ENCODE measurements at regions of chr12 and their contacts with region 1.

Region 1: DNA sequence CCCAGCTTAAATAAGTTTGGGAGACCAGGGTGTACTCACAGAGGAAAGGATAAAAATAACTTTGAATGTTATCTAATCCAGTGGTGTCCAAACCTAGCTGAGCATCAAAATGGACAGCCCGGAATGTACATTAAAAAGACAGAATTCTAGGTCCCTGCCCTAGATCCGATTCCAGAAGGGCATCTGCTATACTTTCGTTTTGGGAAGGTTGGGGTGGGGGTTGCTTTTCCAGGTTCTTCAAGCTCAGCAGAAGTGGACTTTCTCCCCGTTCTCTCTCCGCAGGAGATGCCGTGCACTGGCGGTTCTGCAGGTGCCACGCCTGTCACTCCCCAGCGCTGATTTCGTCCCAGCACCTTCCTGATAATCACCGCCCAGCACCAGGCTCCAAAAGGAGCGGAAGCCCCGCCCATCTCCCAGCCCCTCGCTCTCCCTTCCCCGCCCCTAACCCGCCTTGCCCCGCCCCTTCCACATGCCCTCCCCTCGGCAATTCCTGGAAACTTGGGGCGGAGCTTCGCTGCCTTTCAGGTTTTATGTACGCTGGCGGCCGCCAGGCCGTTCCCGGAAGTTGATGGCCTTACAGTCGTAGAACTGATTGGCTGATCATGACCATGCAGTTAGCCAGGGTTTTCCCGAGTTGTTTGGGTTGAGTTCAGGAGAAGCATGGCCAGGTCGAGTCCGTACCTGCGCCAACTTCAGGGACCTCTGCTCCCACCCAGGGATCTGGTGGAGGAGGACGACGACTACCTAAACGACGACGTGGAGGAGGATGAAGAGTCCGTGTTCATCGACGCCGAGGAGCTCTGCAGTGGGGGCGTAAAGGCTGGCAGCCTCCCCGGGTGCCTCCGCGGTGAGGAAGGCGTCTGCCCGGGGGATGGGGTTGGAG is at the start of gene HELB:
- DNase-seq: peak; percentile 73 to 93 (median 84)
- ATAC-seq: peak; percentile 92
- H3K4me3 ChIP-seq: peak within 1 kb of the TSS; percentile 98
- H3K4me3 Mint-ChIP-seq: peak within 1 kb of the TSS; percentile 87 to 99 (median 97)
- H3K27ac ChIP-seq: peak within 1 kb of the TSS; percentile 91
- H3K27ac Mint-ChIP-seq: peak within 1 kb of the TSS; percentile 90 to 99 (median 98)
- H3K4me1 ChIP-seq: peaks cover 17 to 20% of the 10 kb centered on the region in 2 donors
- H3K4me1 Mint-ChIP-seq: peaks cover 25 to 63% (median 54%) of the 10 kb centered on the region in 7 donors
- H3K27me3 ChIP-seq: no peaks in the 10 kb centered on the region
- H3K27me3 Mint-ChIP-seq: peaks cover 0 to 5% (median 0%) of the 10 kb centered on the region in 5 donors
- total RNA-seq, gene HELB: 47.9 to 59.2 (median 54.0) TPM

Region 2: GRCh38 chr12:64445490-64445889 is 1856.7 kb before region 1 on chr12:
- CTCF ChIA-PET with region 1: no interaction called
- POLR2A ChIA-PET with region 1: no interaction called
- intact Hi-C with region 1: no loop called
- DNase-seq: no peak
- ATAC-seq: no peak
- H3K4me3 ChIP-seq: no peak overlapping the region
- H3K4me3 Mint-ChIP-seq: no peak overlapping the region
- H3K27ac ChIP-seq: no peak overlapping the region
- H3K27ac Mint-ChIP-seq: peak overlapping the region in 6 of 9 donors; percentile 14 to 79 (median 54)
- H3K4me1 ChIP-seq: peaks cover under 1 to 12% of the 10 kb centered on the region in 2 donors
- H3K4me1 Mint-ChIP-seq: peaks cover 12 to 38% (median 31%) of the 10 kb centered on the region in 7 donors
- H3K27me3 ChIP-seq: no peaks in the 10 kb centered on the region
- H3K27me3 Mint-ChIP-seq: no peaks in the 10 kb centered on the region

Region 3: GRCh38 chr12:64669270-64669842 is 1632.8 kb before region 1 on chr12:
- CTCF ChIA-PET with region 1: no interaction called
- POLR2A ChIA-PET with region 1: no interaction called
- intact Hi-C with region 1: loop called (anchors 5 to 10 kb)
- DNase-seq: peak; percentile 26 to 87 (median 84)
- ATAC-seq: peak; percentile 93
- H3K4me3 ChIP-seq: peak overlapping the region; percentile 52
- H3K4me3 Mint-ChIP-seq: peak overlapping the region; percentile 85 to 98 (median 92)
- H3K27ac ChIP-seq: peak overlapping the region; percentile 72
- H3K27ac Mint-ChIP-seq: peak overlapping the region; percentile 91 to 99 (median 97)
- H3K4me1 ChIP-seq: peaks cover 89 to 90% of the 10 kb centered on the region in 2 donors
- H3K4me1 Mint-ChIP-seq: peaks cover 65 to 98% (median 90%) of the 10 kb centered on the region in 7 donors
- H3K27me3 ChIP-seq: no peaks in the 10 kb centered on the region
- H3K27me3 Mint-ChIP-seq: no peaks in the 10 kb centered on the region

Region 4: DNA sequence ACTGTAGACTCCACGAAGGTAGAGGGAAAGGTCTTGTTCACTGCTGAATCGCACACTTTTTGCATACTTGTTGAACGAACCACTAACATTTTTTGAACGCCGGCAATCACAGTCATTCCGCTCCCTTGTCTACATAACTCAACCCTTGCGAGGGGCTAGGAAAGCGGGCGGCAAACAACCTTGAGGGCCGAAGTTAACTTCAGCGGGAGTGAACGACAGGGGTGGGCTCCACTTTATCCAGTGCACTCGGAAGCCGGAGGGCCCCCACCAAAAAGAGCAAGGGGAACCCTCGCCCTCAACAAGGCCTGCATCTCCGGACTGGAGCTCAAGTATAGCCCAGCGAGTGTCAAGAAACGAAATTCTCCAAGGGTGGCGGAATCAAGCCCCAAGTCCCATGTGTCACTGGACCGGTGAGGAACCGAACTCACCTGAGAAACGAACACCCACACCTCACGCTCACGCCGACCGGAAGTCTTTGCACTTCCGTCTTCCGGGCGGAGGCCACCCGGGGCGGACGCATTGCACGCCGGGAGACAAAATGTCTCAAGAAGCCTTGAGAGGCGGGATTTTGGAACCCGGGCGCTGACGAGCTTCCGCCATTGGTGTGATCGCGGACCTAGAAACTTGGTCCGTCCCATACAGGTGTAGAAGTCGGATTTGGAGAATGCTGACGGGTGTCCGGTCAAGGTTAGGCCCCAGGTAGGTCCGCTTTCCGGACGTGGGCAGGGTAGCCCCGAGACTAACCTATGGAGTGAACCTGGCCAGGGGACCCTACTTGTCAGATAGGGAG is 171.7 kb before region 1 on chr12 and contains the start of gene LLPH:
- CTCF ChIA-PET with region 1: no interaction called
- POLR2A ChIA-PET with region 1: interaction called, 9 read pairs
- intact Hi-C with region 1: loop called (anchors 1 kb)
- DNase-seq: peak; percentile 72 to 88 (median 86)
- ATAC-seq: peak; percentile 97
- H3K4me3 ChIP-seq: peak within 1 kb of the TSS; percentile 99
- H3K4me3 Mint-ChIP-seq: peak within 1 kb of the TSS; percentile 92 to 98 (median 97)
- H3K27ac ChIP-seq: peak within 1 kb of the TSS; percentile 87
- H3K27ac Mint-ChIP-seq: peak within 1 kb of the TSS; percentile 95 to 99 (median 97)
- H3K4me1 ChIP-seq: peaks cover 19 to 23% of the 10 kb centered on the region in 2 donors
- H3K4me1 Mint-ChIP-seq: peaks cover 37 to 76% (median 63%) of the 10 kb centered on the region in 7 donors
- H3K27me3 ChIP-seq: no peaks in the 10 kb centered on the region
- H3K27me3 Mint-ChIP-seq: no peaks in the 10 kb centered on the region
- total RNA-seq, gene LLPH: 14.7 to 29.1 (median 28.4) TPM

Region 5: DNA sequence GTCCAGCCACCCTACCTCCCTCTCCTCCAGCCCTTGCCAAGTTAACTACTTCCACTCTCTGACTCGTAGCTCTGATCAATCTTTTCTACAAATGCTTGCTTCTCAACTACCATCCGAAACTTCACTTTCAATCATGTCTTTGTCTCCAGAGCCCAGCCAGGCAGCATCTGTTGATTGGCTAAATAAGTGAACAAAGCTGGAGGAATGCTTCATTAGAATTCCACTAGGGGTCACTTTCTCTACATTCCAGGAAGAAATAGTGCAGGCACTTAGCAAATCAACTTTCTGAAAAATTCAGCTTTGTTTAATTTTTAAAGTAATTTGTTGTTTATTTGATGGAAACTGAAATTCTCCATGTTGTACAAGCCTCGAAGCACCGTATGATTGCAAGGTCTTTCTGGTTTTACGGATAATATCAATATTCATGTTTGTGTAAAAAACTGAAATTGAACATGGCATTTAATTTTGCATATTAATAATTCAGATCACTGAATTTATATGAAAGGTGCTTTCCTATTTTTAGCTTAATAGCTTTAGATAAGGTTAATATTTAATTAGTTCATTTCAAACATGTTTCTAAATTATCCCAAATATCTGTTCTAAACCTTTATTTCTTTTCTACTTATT is 32.3 kb before region 1 on chr12:
- CTCF ChIA-PET with region 1: interaction called, 10 read pairs
- POLR2A ChIA-PET with region 1: interaction called, 11 read pairs
- intact Hi-C with region 1: loop called (anchors 1 to 2 kb)
- DNase-seq: peak in 7 of 9 donors; percentile 20 to 62 (median 52)
- ATAC-seq: peak; percentile 72
- H3K4me3 ChIP-seq: no peak overlapping the region
- H3K4me3 Mint-ChIP-seq: no peak overlapping the region
- H3K27ac ChIP-seq: no peak overlapping the region
- H3K27ac Mint-ChIP-seq: peak overlapping the region in 1 of 9 donors; percentile 55
- H3K4me1 ChIP-seq: peaks cover 0 to 13% of the 10 kb centered on the region in 2 donors
- H3K4me1 Mint-ChIP-seq: peaks cover 6 to 22% (median 9%) of the 10 kb centered on the region in 7 donors
- H3K27me3 ChIP-seq: no peaks in the 10 kb centered on the region
- H3K27me3 Mint-ChIP-seq: no peaks in the 10 kb centered on the region

Region 6: GRCh38 chr12:66288121-66288520 is 14.1 kb before region 1 on chr12:
- CTCF ChIA-PET with region 1: interaction called, 6 read pairs
- POLR2A ChIA-PET with region 1: interaction called, 44 read pairs
- intact Hi-C with region 1: loop called (anchors 1 kb)
- DNase-seq: peak in 8 of 9 donors; percentile 48 to 93 (median 89)
- ATAC-seq: peak; percentile 96
- H3K4me3 ChIP-seq: peak overlapping the region; percentile 47
- H3K4me3 Mint-ChIP-seq: peak overlapping the region; percentile 57 to 82 (median 68)
- H3K27ac ChIP-seq: peak overlapping the region; percentile 4
- H3K27ac Mint-ChIP-seq: peak overlapping the region; percentile 70 to 96 (median 85)
- H3K4me1 ChIP-seq: peaks cover 57 to 80% of the 10 kb centered on the region in 2 donors
- H3K4me1 Mint-ChIP-seq: peaks cover 61 to 100% (median 84%) of the 10 kb centered on the region in 7 donors
- H3K27me3 ChIP-seq: no peaks in the 10 kb centered on the region
- H3K27me3 Mint-ChIP-seq: no peaks in the 10 kb centered on the region

Region 7: DNA sequence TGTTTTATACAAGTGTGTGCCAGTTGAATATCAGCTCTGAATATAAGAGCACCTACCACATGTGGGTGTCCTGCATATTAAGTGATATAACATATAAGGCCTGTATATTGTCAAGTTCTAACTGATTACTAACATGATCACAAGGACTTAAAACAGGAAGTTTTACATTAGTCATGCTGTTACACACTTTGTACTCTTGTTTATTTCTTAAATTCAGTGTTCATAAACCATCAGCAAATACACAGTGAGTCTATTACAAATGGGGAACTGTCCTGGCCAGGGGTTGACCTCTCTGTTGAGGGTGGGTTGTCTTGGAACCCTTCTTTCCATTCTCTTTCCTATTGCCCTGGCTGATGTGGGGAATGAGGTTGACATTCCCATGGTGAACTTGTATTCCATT is 19.2 kb after region 1 on chr12:
- CTCF ChIA-PET with region 1: no interaction called
- POLR2A ChIA-PET with region 1: interaction called, 6 read pairs
- intact Hi-C with region 1: loop called (anchors 1 to 2 kb)
- DNase-seq: no peak
- ATAC-seq: peak; percentile 76
- H3K4me3 ChIP-seq: no peak overlapping the region
- H3K4me3 Mint-ChIP-seq: no peak overlapping the region
- H3K27ac ChIP-seq: no peak overlapping the region
- H3K27ac Mint-ChIP-seq: peak overlapping the region in 6 of 9 donors; percentile 1 to 71 (median 10)
- H3K4me1 ChIP-seq: peaks cover 0 to 4% of the 10 kb centered on the region in 2 donors
- H3K4me1 Mint-ChIP-seq: peaks cover 18 to 80% (median 69%) of the 10 kb centered on the region in 7 donors
- H3K27me3 ChIP-seq: no peaks in the 10 kb centered on the region
- H3K27me3 Mint-ChIP-seq: no peaks in the 10 kb centered on the region

Measured in naive thymus-derived CD4-positive, alpha-beta T cell (primary cell).